GM12878 (cell line): ENCODE measurements at regions of chr5 and their contacts with region 1.

Region 1: GRCh38 chr5:95846554-95847260 is 24.2 kb upstream of the GLRX start:
- DNase-seq: no peak
- ATAC-seq: peak; percentile 82
- H3K4me3 ChIP-seq: no peak overlapping the region
- H3K27ac ChIP-seq: no peak overlapping the region
- H3K4me1 ChIP-seq: peaks cover 12% of the 10 kb centered on the region
- H3K27me3 ChIP-seq: no peaks in the 10 kb centered on the region
- CTCF ChIP-seq: peak; percentile 88 to 97 (median 95); a peak in 5 of 6 replicates
- EP300 ChIP-seq: no peak
- POLR2A ChIP-seq: no peak
- RAD21 ChIP-seq: peak; percentile 98

Region 2: GRCh38 chr5:95554647-95555548 is 291.8 kb before region 1 on chr5 and contains the starts of genes ARSK and SKIC3:
- CTCF ChIA-PET with region 1: no interaction called
- POLR2A ChIA-PET with region 1: no interaction called
- RAD21 ChIA-PET with region 1: interaction called, 3 read pairs
- SMC1A ChIA-PET with region 1: no interaction called
- in situ Hi-C with region 1: no loop called
- intact Hi-C with region 1: loop called (anchors 10 kb)
- DNase-seq: peak; percentile 99
- ATAC-seq: peak; percentile 94
- H3K4me3 ChIP-seq: peak within 1 kb of the TSS; percentile 87
- H3K27ac ChIP-seq: peak within 1 kb of the TSS; percentile 80
- H3K4me1 ChIP-seq: peaks cover 4% of the 10 kb centered on the region; the same call in 1 of the 2 replicates
- H3K27me3 ChIP-seq: no peaks in the 10 kb centered on the region
- CTCF ChIP-seq: peak in 2 of 3 experiments; percentile 27 to 33; a peak in 4 of 6 replicates
- EP300 ChIP-seq: no peak
- POLR2A ChIP-seq: peak; percentile 91
- RAD21 ChIP-seq: no peak
- polyA plus RNA-seq, gene ARSK: 1.6 to 3.5 TPM
- polyA plus RNA-seq, gene SKIC3: 23.6 to 42.1 TPM

Region 3: DNA sequence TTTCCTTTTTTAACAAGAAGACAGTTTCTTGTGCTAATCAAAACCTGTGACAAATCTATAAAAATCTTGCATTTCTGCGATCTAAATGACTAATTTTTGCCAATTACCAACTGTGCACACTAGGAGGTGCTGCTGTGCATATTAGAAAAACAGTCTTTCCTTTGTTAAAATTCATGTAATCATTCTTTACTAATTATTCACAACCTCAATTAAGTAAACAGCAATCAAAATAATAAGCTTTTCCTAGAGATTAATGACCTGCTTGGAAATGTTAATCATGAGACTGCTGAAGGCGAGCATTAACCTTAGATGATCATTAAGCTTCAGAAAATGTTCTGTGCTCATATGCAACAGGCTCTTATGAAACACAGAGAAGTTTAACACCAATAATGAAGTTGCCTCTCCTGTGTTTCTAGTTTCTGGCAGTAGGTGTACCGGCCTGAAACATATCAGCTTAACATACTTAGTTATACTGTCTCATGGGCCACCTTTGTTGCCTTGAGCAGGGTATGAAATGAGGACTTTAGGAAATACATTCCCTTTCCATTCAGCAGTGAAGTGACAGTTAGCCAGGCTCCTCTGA is 182.4 kb before region 1 on chr5:
- CTCF ChIA-PET with region 1: interaction called, 81 read pairs
- POLR2A ChIA-PET with region 1: no interaction called
- RAD21 ChIA-PET with region 1: interaction called, 49 read pairs
- SMC1A ChIA-PET with region 1: interaction called, 96 read pairs
- in situ Hi-C with region 1: loop called (anchors 5 kb)
- intact Hi-C with region 1: loop called (anchors 1 kb)
- DNase-seq: peak; percentile 11
- ATAC-seq: peak; percentile 38; the same call in 2 of the 3 replicates
- H3K4me3 ChIP-seq: no peak overlapping the region
- H3K27ac ChIP-seq: no peak overlapping the region
- H3K4me1 ChIP-seq: no peaks in the 10 kb centered on the region
- H3K27me3 ChIP-seq: no peaks in the 10 kb centered on the region
- CTCF ChIP-seq: peak; percentile 66 to 84 (median 80)
- EP300 ChIP-seq: no peak
- POLR2A ChIP-seq: no peak
- RAD21 ChIP-seq: peak; percentile 76

Region 4: GRCh38 chr5:95773335-95774059 is 73.2 kb before region 1 on chr5:
- CTCF ChIA-PET with region 1: interaction called, 653 read pairs
- POLR2A ChIA-PET with region 1: no interaction called
- RAD21 ChIA-PET with region 1: interaction called, 209 read pairs
- SMC1A ChIA-PET with region 1: interaction called, 622 read pairs
- in situ Hi-C with region 1: loop called (anchors 5 kb)
- intact Hi-C with region 1: no loop called
- DNase-seq: no peak
- ATAC-seq: peak; percentile 35; the same call in 2 of the 3 replicates
- H3K4me3 ChIP-seq: no peak overlapping the region
- H3K27ac ChIP-seq: no peak overlapping the region
- H3K4me1 ChIP-seq: peaks cover 4% of the 10 kb centered on the region; the same call in 1 of the 2 replicates
- H3K27me3 ChIP-seq: no peaks in the 10 kb centered on the region
- CTCF ChIP-seq: no peak
- EP300 ChIP-seq: no peak
- POLR2A ChIP-seq: no peak
- RAD21 ChIP-seq: no peak

Region 5: GRCh38 chr5:95808686-95809413 is 37.9 kb before region 1 on chr5:
- CTCF ChIA-PET with region 1: interaction called, 45 read pairs
- POLR2A ChIA-PET with region 1: interaction called, 5 read pairs
- RAD21 ChIA-PET with region 1: interaction called, 13 read pairs
- SMC1A ChIA-PET with region 1: interaction called, 320 read pairs
- in situ Hi-C with region 1: no loop called
- intact Hi-C with region 1: no loop called
- DNase-seq: peak; percentile 98
- ATAC-seq: peak; percentile 100
- H3K4me3 ChIP-seq: peak overlapping the region; percentile 36; the same call in 1 of the 2 replicates
- H3K27ac ChIP-seq: peak overlapping the region; percentile 97
- H3K4me1 ChIP-seq: peaks cover 29% of the 10 kb centered on the region
- H3K27me3 ChIP-seq: no peaks in the 10 kb centered on the region
- CTCF ChIP-seq: no peak
- EP300 ChIP-seq: peak; percentile 12 to 13; a peak in 1 of 4 replicates
- POLR2A ChIP-seq: no peak
- RAD21 ChIP-seq: no peak

Region 6: DNA sequence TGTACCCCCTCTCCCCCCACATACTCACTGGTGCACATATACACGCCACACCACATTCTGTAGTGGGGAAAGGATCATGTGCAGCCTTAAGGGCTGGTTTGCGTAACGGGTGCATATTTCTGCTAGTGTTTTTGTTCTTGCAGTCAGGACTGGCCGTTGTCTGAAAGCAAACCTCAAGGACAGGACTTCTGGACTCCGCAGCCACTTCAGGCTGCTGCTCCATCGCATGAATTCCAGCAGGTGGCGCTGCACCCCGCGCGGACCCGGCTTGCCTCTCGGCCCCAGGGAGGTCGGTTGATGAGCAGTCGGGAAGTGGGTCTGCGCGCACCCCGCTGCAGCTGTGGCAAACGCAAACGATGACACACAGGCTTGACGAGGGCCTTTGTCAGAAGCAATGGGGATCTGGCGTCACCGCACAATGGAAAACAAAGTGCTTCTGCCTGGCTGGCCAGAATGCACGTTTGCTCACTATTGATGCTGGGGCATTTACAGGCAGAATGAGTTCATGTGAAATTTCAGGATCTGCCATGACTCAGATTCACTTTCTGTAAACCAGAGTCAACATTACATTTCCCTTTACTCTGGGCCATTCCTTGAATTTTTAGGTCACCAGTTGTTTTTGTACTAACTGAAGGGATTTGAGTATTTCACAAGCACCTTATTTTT is 12.1 kb after region 1 on chr5:
- CTCF ChIA-PET with region 1: interaction called, 23 read pairs
- POLR2A ChIA-PET with region 1: interaction called, 5 read pairs
- RAD21 ChIA-PET with region 1: interaction called, 3 read pairs
- SMC1A ChIA-PET with region 1: interaction called, 13 read pairs
- in situ Hi-C with region 1: no loop called
- intact Hi-C with region 1: no loop called
- DNase-seq: peak; percentile 67
- ATAC-seq: peak; percentile 95
- H3K4me3 ChIP-seq: no peak overlapping the region; the same call in 1 of the 2 replicates
- H3K27ac ChIP-seq: no peak overlapping the region
- H3K4me1 ChIP-seq: peaks cover 21% of the 10 kb centered on the region
- H3K27me3 ChIP-seq: no peaks in the 10 kb centered on the region
- CTCF ChIP-seq: peak; percentile 96 to 99 (median 98)
- EP300 ChIP-seq: no peak
- POLR2A ChIP-seq: no peak
- RAD21 ChIP-seq: peak; percentile 99